ENCODE measurements at regions of chr1 and their contacts with region 1.

Region 1: GRCh38 chr1:246012341-246012740 is 494.7 kb downstream of the SMYD3 start:
- DNase-seq: no peak

Region 2: DNA sequence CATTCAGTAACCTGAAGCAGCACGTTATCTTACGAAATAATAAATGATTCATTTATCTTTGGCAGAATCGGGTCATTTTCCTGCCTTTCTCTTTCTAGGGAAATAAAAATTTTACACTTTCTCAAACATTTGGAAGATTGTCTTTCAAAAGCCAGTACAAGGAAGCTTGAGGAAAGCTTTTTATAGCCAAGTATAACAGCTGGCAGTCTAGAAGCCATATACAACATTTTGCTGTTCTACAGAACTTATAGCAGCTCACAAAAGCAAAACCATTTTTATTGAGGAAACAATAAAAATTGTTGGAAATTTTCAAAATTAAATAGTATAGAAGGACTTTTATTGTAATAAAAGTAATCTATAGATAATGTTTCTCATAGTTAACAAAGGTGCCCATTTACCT is 46.1 kb after region 1 on chr1:
- intact Hi-C with region 1: no loop called
- DNase-seq: no peak

Region 3: DNA sequence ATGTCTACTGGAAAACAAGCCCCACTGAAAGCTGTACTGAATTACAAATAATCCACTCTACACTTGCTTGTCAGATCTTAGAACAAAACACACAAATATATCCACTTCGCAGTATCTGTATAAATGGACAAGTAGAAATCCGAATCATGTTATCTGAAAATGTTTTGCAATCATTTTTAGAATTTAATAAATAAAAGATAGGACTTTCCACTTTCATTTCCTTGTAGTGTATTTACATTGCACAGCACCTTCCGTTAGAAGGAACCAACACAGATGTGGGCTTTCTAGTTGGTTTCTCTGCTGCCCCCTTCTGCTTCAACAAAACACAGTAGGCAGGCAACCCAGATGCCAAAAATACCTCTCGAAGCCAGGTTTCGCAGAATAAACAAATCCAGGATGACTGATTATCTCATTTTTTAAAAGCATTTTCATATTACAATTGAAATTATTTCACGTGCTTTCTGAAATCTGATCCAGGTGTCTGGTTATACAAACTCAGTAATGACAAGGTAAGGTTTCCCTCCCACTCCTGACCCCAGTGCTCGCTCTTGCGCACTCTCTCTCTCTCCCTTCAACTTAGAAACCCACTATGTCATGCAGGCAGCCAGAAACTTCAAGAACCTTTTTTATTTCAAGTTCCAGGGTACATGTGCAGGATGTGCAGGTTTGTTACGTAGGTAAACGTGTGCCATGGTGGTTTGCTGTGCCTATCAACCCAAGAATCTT is 104.9 kb after region 1 on chr1:
- intact Hi-C with region 1: loop called (anchors 5 kb)
- DNase-seq: peak in 2 of 10 donors; percentile 13 to 21

Region 4: DNA sequence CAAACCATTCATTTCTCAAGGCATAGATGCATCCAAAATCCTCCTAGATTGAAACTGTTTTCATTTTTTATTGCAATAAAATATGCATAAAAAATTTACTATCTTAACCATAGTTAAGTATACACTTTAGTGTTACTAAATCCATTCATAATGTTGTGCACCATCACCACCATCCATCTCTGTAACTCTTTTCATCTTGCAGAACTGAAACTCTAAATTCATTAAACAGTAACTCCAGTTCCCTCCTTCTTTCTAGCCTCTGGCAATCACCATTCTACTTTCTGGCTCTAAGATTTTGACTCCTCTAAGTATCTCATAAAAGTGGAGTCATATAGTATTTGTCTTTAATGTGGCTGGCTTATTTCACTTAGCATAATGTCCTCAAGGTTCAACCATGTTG is 257.9 kb after region 1 on chr1:
- intact Hi-C with region 1: loop called (anchors 10 kb)
- DNase-seq: no peak

Region 5: DNA sequence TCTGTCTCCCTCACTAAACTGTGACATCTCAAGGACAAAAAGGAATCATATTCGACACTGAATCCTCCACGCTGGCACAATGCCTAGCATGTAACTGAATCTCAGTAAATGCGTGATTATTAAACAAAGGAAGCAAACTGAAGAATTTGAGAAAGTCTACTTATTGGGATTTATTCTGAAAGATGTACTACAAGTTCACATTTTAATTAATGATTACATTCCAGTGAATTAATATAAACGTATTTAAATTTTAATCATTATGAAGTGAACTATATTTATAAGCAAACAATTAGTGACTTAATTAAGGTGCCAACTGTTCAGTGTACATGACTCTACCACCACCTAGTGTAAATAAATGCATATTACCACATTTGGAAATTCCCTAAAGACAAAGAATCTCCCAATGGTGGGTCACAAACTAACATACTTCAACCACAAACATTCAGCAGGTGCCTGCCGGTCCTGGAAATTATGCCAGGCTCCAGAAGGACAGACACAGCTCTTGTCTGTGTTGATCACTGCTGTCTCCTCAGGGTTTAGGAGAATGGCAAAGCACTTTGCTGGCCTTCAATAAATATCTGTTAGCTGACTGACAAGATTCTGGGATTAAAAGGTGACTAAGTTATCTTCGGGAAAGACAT is 438.4 kb after region 1 on chr1:
- intact Hi-C with region 1: loop called (anchors 5 kb)
- DNase-seq: no peak

Measured in posterior cingulate gyrus (tissue), 11 donors.